Naive thymus-derived CD4-positive, alpha-beta T cell (primary cell): ENCODE measurements at regions of chr15 and their contacts with region 1.

Region 1: GRCh38 chr15:100349696-100350433 is 8.1 kb upstream of the ADAMTS17 start:
- DNase-seq: peak; percentile 74 to 90 (median 82)
- ATAC-seq: peak; percentile 98
- H3K4me3 ChIP-seq: peak overlapping the region; percentile 98
- H3K4me3 Mint-ChIP-seq: peak overlapping the region; percentile 89 to 97 (median 96)
- H3K27ac ChIP-seq: peak overlapping the region; percentile 79
- H3K27ac Mint-ChIP-seq: peak overlapping the region; percentile 77 to 95 (median 90)
- H3K4me1 ChIP-seq: peaks cover 0 to 12% of the 10 kb centered on the region in 2 donors
- H3K4me1 Mint-ChIP-seq: peaks cover 7 to 22% (median 14%) of the 10 kb centered on the region in 7 donors
- H3K27me3 ChIP-seq: peaks cover 0 to 4% of the 10 kb centered on the region in 2 donors
- H3K27me3 Mint-ChIP-seq: peaks cover 0 to 29% (median 14%) of the 10 kb centered on the region in 5 donors

Region 2: GRCh38 chr15:100330629-100331215 is 19.1 kb before region 1 on chr15:
- CTCF ChIA-PET with region 1: interaction called, 13 read pairs
- POLR2A ChIA-PET with region 1: interaction called, 4 read pairs
- intact Hi-C with region 1: loop called in 1 of 2 experiments (anchors 1 kb)
- DNase-seq: peak in 7 of 9 donors; percentile 22 to 84 (median 79)
- ATAC-seq: peak; percentile 89
- H3K4me3 ChIP-seq: peak overlapping the region; percentile 43
- H3K4me3 Mint-ChIP-seq: peak overlapping the region; percentile 45 to 89 (median 78)
- H3K27ac ChIP-seq: peak overlapping the region; percentile 24
- H3K27ac Mint-ChIP-seq: peak overlapping the region; percentile 11 to 77 (median 70)
- H3K4me1 ChIP-seq: peaks cover 58 to 66% of the 10 kb centered on the region in 2 donors
- H3K4me1 Mint-ChIP-seq: peaks cover 41 to 87% (median 74%) of the 10 kb centered on the region in 7 donors
- H3K27me3 ChIP-seq: no peaks in the 10 kb centered on the region
- H3K27me3 Mint-ChIP-seq: peaks cover 0 to 10% (median 0%) of the 10 kb centered on the region in 5 donors

Region 3: GRCh38 chr15:100572362-100572983 is 222.6 kb after region 1 on chr15:
- CTCF ChIA-PET with region 1: interaction called, 135 read pairs
- POLR2A ChIA-PET with region 1: interaction called, 16 read pairs
- intact Hi-C with region 1: loop called (anchors 1 kb)
- DNase-seq: peak in 6 of 9 donors; percentile 22 to 52 (median 47)
- ATAC-seq: peak; percentile 67
- H3K4me3 ChIP-seq: peak overlapping the region; percentile 5
- H3K4me3 Mint-ChIP-seq: peak overlapping the region; percentile 34 to 86 (median 80)
- H3K27ac ChIP-seq: peak overlapping the region; percentile 65
- H3K27ac Mint-ChIP-seq: peak overlapping the region; percentile 84 to 99 (median 94)
- H3K4me1 ChIP-seq: peaks cover 0 to 36% of the 10 kb centered on the region in 2 donors
- H3K4me1 Mint-ChIP-seq: peaks cover 22 to 83% (median 70%) of the 10 kb centered on the region in 7 donors
- H3K27me3 ChIP-seq: no peaks in the 10 kb centered on the region
- H3K27me3 Mint-ChIP-seq: no peaks in the 10 kb centered on the region

Region 4: GRCh38 chr15:100602064-100602822 is 252.4 kb after region 1 on chr15 and contains the starts of genes ASB7 and LINS1:
- CTCF ChIA-PET with region 1: interaction called, 13 read pairs
- POLR2A ChIA-PET with region 1: interaction called, 11 read pairs
- intact Hi-C with region 1: loop called in 1 of 2 experiments (anchors 1 kb)
- DNase-seq: peak; percentile 97 to 100 (median 100)
- ATAC-seq: peak; percentile 97
- H3K4me3 ChIP-seq: peak within 1 kb of the TSS; percentile 97
- H3K4me3 Mint-ChIP-seq: no peak within 1 kb of the TSS
- H3K27ac ChIP-seq: peak within 1 kb of the TSS; percentile 91
- H3K27ac Mint-ChIP-seq: peak within 1 kb of the TSS in 6 of 9 donors; percentile 50 to 95 (median 85)
- H3K4me1 ChIP-seq: peaks cover 35 to 52% of the 10 kb centered on the region in 2 donors
- H3K4me1 Mint-ChIP-seq: peaks cover 32 to 68% (median 41%) of the 10 kb centered on the region in 7 donors
- H3K27me3 ChIP-seq: no peaks in the 10 kb centered on the region
- H3K27me3 Mint-ChIP-seq: no peaks in the 10 kb centered on the region
- total RNA-seq, gene ASB7: 15.4 to 27.2 (median 18.9) TPM
- total RNA-seq, gene LINS1: 50.7 to 116 (median 76.9) TPM

Region 5: GRCh38 chr15:100873029-100873677 is 523.3 kb after region 1 on chr15:
- CTCF ChIA-PET with region 1: interaction called, 6 read pairs
- POLR2A ChIA-PET with region 1: no interaction called
- intact Hi-C with region 1: loop called (anchors 1 to 2 kb)
- DNase-seq: peak in 8 of 9 donors; percentile 10 to 59 (median 48)
- ATAC-seq: peak; percentile 83
- H3K4me3 ChIP-seq: no peak overlapping the region
- H3K4me3 Mint-ChIP-seq: no peak overlapping the region
- H3K27ac ChIP-seq: no peak overlapping the region
- H3K27ac Mint-ChIP-seq: no peak overlapping the region
- H3K4me1 ChIP-seq: no peaks in the 10 kb centered on the region
- H3K4me1 Mint-ChIP-seq: no peaks in the 10 kb centered on the region
- H3K27me3 ChIP-seq: peaks cover 0 to under 1% of the 10 kb centered on the region in 2 donors
- H3K27me3 Mint-ChIP-seq: peaks cover 14 to 43% (median 27%) of the 10 kb centered on the region in 5 donors